Pancreas (tissue), 10 donors: ENCODE measurements at regions of chr3 and their contacts with region 1.

Region 1: GRCh38 chr3:4633078-4634004 is 140.2 kb downstream of the ITPR1 start:
- DNase-seq: no peak
- ATAC-seq: peak in 3 of 4 donors; percentile 83 to 92 (median 90)
- H3K4me3 ChIP-seq: no peak overlapping the region
- H3K27ac ChIP-seq: no peak overlapping the region
- H3K4me1 ChIP-seq: no peaks in the 10 kb centered on the region
- H3K27me3 ChIP-seq: no peaks in the 10 kb centered on the region
- CTCF ChIP-seq: peak; percentile 69 to 78 (median 72)

Region 2: DNA sequence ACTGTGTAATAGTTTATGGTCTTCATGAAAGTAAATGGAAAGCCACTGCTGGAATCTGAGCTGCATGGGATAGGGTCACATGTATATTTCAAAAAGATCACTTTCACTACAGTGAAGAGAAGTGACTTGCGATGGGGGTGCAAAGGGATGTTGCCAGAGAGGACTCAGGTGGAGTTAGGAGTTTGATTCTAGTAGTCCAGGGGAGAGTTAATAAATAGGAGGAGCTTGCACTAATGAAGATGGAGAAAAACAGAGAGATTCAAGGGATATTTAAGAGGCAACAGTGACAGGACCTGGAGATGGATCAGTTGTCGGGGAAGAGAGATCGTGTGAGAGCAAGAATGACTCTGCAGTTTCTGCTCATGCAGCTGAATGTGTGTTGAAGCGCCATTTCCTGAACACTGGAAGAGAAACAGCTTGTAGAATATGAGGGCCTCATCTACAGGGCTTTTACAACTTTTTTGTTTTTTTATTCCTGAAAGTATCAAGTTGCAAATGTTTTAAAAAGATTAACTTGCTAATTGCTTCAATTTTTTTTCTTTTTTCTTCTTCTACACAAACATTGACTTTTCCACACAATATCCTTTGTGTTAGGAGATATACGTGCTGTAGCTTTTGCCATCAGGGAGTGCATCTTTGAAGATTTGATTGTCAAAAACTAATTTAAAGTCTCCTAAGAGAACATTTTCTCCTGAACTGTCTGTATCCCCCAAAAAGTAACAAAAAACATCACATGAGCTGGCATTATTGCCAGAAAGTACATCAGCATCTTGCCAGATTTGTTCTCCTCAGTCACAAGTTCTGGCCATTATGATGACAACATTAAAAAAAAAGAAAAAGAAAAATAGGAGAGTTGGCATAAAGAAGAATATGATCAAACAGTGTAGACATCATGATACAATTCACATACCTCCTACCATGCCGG is 292.7 kb before region 1 on chr3:
- intact Hi-C with region 1: loop called in 1 of 3 experiments (anchors 10 kb)
- DNase-seq: no peak
- ATAC-seq: no peak
- H3K4me3 ChIP-seq: no peak overlapping the region
- H3K27ac ChIP-seq: no peak overlapping the region
- H3K4me1 ChIP-seq: no peaks in the 10 kb centered on the region
- H3K27me3 ChIP-seq: no peaks in the 10 kb centered on the region
- CTCF ChIP-seq: no peak

Region 3: GRCh38 chr3:4350789-4351163 is 282.6 kb before region 1 on chr3:
- intact Hi-C with region 1: loop called in 2 of 3 experiments (anchors 5 to 10 kb)
- DNase-seq: peak in 3 of 6 donors; percentile 17 to 43 (median 26)
- ATAC-seq: peak; percentile 77 to 92 (median 88)
- H3K4me3 ChIP-seq: peak overlapping the region in 1 of 4 donors; percentile 2
- H3K27ac ChIP-seq: no peak overlapping the region
- H3K4me1 ChIP-seq: peaks cover 7 to 8% (median 7%) of the 10 kb centered on the region in 3 donors
- H3K27me3 ChIP-seq: no peaks in the 10 kb centered on the region
- CTCF ChIP-seq: peak; percentile 43 to 74 (median 68)

Region 4: DNA sequence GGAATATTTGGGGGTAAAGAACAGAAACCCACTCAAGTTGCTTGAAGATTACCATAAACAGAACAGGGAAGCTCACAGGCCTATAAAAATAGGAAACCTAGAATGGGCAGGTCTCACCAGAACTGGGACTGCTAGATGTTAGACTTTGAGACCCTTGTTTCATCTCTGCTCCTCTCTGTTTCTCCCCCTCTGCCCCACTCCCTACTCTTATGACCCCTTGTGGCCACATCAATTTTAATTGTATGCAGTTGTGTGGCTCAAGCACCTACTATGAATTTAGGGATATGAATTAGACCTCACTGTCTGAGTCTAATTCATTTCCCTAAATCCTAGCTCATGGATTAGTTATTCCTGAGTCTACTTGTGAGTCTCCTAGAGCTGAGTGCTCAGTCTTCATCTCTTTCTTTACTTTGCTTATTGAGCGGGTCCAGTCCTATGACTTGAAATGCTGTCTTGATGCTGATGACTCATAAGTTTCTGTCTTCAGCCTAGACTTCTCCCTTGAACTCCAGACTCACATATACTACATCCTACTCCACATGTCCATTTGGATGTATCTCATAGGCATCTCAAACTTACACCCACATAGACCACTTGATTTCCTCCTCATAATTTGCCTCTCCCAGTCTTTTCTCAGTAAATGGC is 61.5 kb before region 1 on chr3:
- intact Hi-C with region 1: no loop called
- DNase-seq: no peak
- ATAC-seq: peak in 2 of 4 donors; percentile 15 to 16
- H3K4me3 ChIP-seq: no peak overlapping the region
- H3K27ac ChIP-seq: no peak overlapping the region
- H3K4me1 ChIP-seq: no peaks in the 10 kb centered on the region
- H3K27me3 ChIP-seq: no peaks in the 10 kb centered on the region
- CTCF ChIP-seq: no peak

Region 5: DNA sequence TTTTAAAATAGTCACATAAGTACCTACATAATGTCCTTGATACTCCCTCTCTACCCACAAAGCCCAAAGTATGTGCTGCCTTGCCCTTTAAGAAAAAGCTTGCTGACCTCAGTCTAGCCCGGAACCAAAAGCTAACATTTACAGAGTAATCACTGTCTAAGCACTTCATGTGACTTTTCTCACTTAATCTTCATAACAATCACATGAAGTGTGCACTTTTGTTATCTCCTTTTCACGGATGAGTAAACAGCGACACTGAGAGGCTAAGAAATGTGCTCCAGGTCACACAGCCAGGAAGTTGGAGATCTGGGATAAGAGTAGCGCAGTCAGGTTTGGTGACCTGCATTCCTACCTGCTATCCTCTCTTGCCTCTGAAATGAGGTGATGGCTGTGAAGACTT is 53.8 kb after region 1 on chr3:
- intact Hi-C with region 1: no loop called
- DNase-seq: peak in 1 of 6 donors; percentile 9
- ATAC-seq: peak; percentile 88 to 96 (median 91)
- H3K4me3 ChIP-seq: no peak overlapping the region
- H3K27ac ChIP-seq: peak overlapping the region in 1 of 4 donors; percentile 22
- H3K4me1 ChIP-seq: peaks cover 4 to 10% (median 6%) of the 10 kb centered on the region in 3 donors
- H3K27me3 ChIP-seq: no peaks in the 10 kb centered on the region
- CTCF ChIP-seq: no peak